A673 (cell line): ENCODE measurements at regions of chr4 and their contacts with region 1.

Region 1: DNA sequence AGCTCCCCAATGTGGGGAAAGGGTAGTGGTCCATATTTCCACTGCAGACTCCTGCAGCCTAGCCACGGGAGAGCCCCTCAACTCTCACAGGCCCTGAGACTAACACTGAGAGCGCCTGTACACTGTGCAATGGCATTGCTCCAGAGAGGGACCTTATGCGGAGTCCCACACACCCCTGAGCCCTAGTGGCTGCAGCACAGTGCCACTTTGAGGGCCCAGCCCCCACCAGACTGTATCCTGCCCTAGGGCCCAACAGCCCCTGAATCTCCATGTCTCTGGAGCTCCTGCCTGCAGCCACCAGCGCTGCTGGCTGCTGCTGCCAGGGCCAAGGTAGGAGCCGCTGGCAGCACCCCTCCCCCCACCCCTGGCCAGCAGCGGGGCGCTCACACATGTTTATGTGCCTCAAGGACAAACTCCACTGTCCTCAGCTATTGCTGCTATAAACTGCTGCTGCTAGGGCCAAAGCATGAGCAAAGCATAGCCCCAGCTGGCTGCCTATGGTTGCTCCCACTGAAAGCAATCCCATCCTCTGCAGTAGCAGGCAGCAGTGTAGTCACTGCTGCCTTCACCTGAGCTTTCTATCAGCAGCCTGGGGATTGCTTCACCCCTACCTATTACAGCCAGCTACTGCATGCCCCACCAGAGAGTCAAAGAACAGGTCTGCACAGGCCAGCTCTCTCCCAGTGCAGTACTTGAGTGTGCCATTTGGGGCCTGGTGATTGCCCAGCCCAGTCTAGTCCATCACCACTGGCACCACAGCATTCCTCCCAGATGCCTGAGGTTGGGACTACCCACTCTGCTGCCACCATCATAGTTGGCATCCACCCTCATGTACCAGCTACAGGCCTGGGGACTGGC is 24.3 kb downstream of the TMEM154 start:
- DNase-seq: no peak
- H3K4me3 ChIP-seq: no peak overlapping the region
- H3K27ac ChIP-seq: no peak overlapping the region
- H3K4me1 ChIP-seq: no peaks in the 10 kb centered on the region
- H3K27me3 ChIP-seq: no peaks in the 10 kb centered on the region
- CTCF ChIP-seq: no peak

Region 2: DNA sequence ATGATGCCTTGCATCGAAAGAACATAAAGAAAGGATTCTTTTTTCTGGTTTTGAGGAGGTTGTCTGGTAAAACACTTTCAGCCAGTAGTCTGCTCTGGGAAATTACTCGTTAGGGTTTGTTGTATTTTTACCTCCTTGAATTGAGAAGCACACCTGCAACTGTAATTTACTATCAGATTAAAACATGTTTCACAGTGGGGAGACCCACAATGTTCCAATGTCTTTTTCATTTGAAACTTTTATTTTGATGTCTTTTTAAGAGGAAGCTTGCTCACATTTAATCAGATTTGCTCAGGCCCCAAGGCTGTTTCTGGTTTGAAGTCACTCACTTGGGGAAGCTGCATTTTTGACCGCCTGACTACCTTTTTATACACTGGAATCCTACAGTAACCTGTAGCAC is 12.3 kb after region 1 on chr4:
- CTCF ChIA-PET with region 1: no interaction called
- POLR2A ChIA-PET with region 1: no interaction called
- intact Hi-C with region 1: loop called (anchors 1 kb)
- DNase-seq: no peak
- H3K4me3 ChIP-seq: no peak overlapping the region
- H3K27ac ChIP-seq: no peak overlapping the region
- H3K4me1 ChIP-seq: no peaks in the 10 kb centered on the region
- H3K27me3 ChIP-seq: no peaks in the 10 kb centered on the region
- CTCF ChIP-seq: no peak

Region 3: GRCh38 chr4:152996108-152996571 is 340.6 kb after region 1 on chr4:
- CTCF ChIA-PET with region 1: no interaction called
- POLR2A ChIA-PET with region 1: no interaction called
- intact Hi-C with region 1: no loop called
- DNase-seq: peak; percentile 9
- H3K4me3 ChIP-seq: no peak overlapping the region
- H3K27ac ChIP-seq: peak overlapping the region; percentile 48
- H3K4me1 ChIP-seq: peaks cover 39% of the 10 kb centered on the region
- H3K27me3 ChIP-seq: no peaks in the 10 kb centered on the region
- CTCF ChIP-seq: no peak

Region 4: DNA sequence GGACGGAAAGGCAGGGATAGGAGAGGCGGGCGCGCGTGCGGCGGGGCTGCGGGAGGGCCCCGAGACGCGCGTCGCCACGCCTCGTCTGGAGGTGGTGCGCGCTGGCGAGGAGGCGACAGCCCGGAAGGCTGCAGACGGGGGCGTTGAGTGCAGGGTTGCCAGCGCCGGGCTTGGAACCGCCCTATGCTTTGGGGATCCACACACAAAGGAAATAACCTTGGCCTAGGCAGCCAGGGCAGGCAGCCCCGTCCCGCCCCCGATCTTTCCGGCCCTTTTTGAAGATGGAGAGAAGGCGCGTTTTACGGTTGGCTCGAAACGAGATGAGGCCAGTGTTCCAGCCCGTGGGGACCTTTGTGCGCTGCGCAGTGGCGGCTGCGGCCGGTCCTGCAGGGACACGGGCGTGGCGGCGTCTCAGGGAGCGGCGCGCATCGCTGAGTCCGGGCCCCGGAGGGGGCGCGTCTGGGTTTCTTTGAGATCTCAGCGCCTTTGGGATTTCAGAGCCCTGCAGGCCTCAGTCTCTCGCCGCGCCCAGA is 497.9 kb after region 1 on chr4:
- CTCF ChIA-PET with region 1: no interaction called
- POLR2A ChIA-PET with region 1: no interaction called
- intact Hi-C with region 1: no loop called
- DNase-seq: peak; percentile 88
- H3K4me3 ChIP-seq: peak overlapping the region; percentile 58
- H3K27ac ChIP-seq: peak overlapping the region; percentile 69
- H3K4me1 ChIP-seq: peaks cover 37% of the 10 kb centered on the region
- H3K27me3 ChIP-seq: no peaks in the 10 kb centered on the region
- CTCF ChIP-seq: no peak